Activated CD4-positive, alpha-beta T cell treated with anti-CD3 and anti-CD28 coated beads, Interleukin-2, amount 10 ng/mL, durations not matched to agents 7 days and 5 days (primary cell): ENCODE measurements at regions of chr7 and their contacts with region 1.

Region 1: DNA sequence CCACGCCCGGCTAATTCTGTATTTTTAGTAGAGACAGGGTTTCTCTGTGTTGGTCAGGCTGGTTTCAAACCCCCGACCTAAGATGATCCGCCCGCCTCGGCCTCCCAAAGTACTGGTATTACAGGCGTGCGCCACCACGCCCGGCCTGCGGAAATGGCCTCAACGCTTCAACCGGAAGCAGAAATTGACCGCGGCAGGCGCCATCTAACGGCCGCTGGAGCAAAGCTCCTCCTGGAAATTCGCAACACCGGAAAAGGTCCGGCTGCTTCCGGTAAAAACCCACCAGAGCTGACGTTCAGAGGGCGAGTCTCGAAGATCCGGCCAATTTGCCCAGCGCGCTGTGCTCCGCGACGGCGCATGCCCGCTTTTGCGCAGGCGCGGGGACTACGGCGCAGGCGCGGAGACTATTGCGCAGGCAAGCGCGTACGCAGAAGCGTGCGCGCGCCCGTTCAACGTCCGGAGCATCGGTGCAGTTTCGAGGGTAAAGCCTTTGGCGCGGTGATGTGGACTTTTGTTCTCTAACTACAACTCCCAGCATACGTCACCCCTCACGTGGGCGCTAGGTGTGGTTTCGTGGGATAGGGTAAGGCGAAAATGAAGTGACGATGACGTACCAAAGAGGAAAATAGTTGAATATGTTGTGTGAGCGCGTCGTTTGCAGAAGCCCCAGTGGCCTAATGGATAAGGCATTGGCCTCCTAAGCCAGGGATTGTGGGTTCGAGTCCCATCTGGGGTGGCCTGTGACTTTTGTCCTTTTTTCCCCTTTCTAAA is 915 bp upstream of the FMC1 start:
- DNase-seq: peak; percentile 99
- H3K4me3 Mint-ChIP-seq: peak overlapping the region; percentile 94
- H3K27ac Mint-ChIP-seq: peak overlapping the region; percentile 98
- H3K4me1 Mint-ChIP-seq: peaks cover 32% of the 10 kb centered on the region
- H3K27me3 Mint-ChIP-seq: peaks cover 3% of the 10 kb centered on the region

Region 2: DNA sequence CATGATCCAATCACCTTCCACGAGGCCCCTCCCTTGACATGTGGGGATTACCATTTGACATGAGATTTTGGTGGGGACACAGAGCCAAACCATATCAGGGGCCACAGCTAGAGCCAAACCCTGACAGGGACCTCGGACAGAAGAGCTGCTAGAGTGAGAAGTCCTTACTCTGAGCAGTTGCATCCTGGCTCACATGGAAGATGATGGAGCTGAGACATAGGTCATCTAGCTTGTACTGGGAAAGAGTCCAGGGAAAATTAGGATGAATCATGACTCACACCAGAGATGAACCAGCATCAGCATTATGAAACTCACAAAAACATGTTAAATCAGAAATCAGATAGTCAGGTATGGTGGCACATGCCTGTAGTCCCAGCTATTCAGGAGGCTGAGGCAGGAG is 11.8 kb before region 1 on chr7:
- CTCF ChIA-PET with region 1: interaction called, 18 read pairs
- POLR2A ChIA-PET with region 1: no interaction called
- DNase-seq: no peak
- H3K4me3 Mint-ChIP-seq: no peak overlapping the region
- H3K27ac Mint-ChIP-seq: no peak overlapping the region
- H3K4me1 Mint-ChIP-seq: peaks cover 13% of the 10 kb centered on the region
- H3K27me3 Mint-ChIP-seq: no peaks in the 10 kb centered on the region

Region 3: DNA sequence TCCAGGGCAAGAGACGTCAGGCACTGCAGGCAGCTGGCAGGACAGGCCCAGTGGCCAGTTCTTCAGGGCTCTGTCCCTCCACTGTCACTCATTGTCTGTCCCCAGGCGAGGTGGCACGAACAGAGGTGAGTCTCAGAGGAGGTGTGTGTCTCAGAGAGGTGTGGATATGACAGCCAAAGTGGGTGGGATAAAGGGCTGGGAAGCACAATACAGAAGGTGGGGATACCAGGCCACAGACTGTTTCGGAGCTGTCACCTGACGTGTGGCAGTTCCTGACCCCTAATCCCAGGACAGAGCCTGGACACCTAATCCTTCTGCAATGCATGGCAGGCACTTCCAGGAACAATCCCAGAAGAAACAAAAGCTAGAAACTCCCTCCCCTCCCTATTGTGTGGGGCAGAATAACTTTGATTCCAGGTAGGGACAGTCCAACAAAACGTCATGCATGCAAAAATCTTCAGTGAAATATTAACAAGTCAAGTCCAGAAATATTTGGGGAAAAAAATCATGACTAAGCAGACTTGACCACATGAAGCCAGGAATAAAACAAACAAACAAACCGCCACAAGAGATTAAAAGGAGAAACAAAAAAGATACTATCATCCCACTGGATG is 131.6 kb after region 1 on chr7:
- CTCF ChIA-PET with region 1: no interaction called
- POLR2A ChIA-PET with region 1: no interaction called
- DNase-seq: no peak
- H3K4me3 Mint-ChIP-seq: no peak overlapping the region
- H3K27ac Mint-ChIP-seq: no peak overlapping the region
- H3K4me1 Mint-ChIP-seq: no peaks in the 10 kb centered on the region
- H3K27me3 Mint-ChIP-seq: no peaks in the 10 kb centered on the region

Region 4: GRCh38 chr7:139494835-139495579 is 154.8 kb after region 1 on chr7:
- CTCF ChIA-PET with region 1: no interaction called
- POLR2A ChIA-PET with region 1: no interaction called
- DNase-seq: peak; percentile 50
- H3K4me3 Mint-ChIP-seq: no peak overlapping the region
- H3K27ac Mint-ChIP-seq: peak overlapping the region; percentile 48
- H3K4me1 Mint-ChIP-seq: peaks cover 27% of the 10 kb centered on the region
- H3K27me3 Mint-ChIP-seq: peaks cover 21% of the 10 kb centered on the region